Activated naive CD4-positive, alpha-beta T cell treated with anti-CD3 and anti-CD28 coated beads for 36 hours (primary cell): ENCODE measurements at regions of chr18 and their contacts with region 1.

Region 1: DNA sequence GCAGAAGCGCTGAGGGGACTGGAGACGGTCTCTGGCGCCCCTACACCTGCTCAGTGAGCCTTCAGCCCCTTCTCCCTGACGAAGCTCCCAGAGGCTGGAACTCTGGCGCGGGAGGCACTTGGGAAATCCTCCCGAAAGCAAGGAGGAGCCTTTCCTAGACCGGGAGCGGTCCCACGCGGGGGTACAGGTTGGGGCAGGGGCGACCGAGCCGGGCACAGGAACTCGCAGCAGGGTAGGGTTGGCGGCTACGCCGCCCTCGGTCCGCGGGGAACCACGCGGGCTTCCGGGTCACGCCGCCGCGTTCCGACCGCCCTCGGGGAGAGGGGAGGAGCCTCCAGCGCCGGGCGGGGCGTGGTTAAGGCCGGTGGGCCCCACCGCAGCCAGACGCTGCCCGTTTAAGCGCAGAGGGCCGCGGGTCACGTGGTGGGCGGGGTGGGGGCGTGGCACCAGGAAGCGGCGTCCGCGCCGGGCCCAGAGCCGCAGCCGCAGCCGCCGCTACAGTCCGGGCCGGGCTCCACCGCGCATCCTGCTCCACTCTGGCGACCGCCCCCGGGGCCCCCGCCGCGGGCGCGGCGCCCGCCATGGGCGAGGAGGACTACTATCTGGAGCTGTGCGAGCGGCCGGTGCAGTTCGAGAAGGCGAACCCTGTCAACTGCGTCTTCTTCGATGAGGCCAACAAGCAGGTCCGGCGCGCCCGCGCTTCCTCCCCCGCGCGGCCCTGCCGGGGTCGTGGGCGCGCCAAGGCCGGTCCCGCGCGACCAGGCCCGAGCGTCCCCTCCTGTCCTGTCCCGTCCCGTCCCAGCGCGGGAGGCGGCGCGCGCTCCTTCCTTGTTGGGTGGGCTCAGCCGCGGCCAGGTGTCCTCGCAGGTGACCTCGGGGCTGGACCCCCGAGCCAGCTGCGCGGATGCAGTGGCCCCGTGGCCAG is at the start of gene RMC1:
- DNase-seq: peak; percentile 97
- H3K4me3 Mint-ChIP-seq: peak within 1 kb of the TSS; percentile 92
- H3K27ac Mint-ChIP-seq: peak within 1 kb of the TSS; percentile 88
- H3K4me1 Mint-ChIP-seq: peaks cover 44% of the 10 kb centered on the region
- H3K27me3 Mint-ChIP-seq: no peaks in the 10 kb centered on the region
- total RNA-seq, gene RMC1: 26.2 to 29.7 TPM

Region 2: DNA sequence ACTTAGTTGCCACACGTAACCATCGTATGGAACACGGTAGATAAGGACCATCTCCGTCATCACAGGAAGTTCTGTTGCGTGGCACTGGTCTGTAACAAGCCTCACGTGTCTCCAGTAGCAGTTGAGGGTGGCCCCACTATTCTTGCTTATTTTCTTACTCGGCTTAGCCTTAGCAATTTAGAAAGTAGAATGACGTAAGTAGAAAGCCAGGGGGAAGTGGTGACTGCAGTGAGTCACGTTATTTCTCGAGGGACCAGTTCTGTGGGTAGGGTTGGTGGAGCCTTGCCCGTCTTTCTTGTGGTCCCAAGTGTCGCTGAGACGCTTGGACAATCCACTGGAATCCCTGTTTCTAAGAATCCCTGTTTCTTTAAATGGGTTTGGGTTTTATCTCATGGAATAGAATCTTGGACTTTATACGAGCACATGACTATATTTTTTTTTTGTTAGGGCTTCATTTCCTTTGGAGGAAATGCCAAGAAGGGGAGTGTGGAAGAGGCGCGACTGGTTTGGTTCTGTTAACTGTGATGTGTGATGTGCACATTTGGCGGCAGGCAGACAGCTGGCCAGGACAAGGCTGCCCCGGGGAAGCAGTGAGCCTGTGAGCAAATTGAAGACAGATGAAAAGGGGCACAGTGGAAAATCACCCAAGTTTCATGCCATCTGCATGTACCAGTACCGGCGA is 271.8 kb before region 1 on chr18:
- CTCF ChIA-PET with region 1: no interaction called
- intact Hi-C with region 1: loop called (anchors 1 kb)
- DNase-seq: peak; percentile 91
- H3K4me3 Mint-ChIP-seq: no peak overlapping the region
- H3K27ac Mint-ChIP-seq: peak overlapping the region; percentile 94
- H3K4me1 Mint-ChIP-seq: peaks cover 45% of the 10 kb centered on the region
- H3K27me3 Mint-ChIP-seq: no peaks in the 10 kb centered on the region

Region 3: DNA sequence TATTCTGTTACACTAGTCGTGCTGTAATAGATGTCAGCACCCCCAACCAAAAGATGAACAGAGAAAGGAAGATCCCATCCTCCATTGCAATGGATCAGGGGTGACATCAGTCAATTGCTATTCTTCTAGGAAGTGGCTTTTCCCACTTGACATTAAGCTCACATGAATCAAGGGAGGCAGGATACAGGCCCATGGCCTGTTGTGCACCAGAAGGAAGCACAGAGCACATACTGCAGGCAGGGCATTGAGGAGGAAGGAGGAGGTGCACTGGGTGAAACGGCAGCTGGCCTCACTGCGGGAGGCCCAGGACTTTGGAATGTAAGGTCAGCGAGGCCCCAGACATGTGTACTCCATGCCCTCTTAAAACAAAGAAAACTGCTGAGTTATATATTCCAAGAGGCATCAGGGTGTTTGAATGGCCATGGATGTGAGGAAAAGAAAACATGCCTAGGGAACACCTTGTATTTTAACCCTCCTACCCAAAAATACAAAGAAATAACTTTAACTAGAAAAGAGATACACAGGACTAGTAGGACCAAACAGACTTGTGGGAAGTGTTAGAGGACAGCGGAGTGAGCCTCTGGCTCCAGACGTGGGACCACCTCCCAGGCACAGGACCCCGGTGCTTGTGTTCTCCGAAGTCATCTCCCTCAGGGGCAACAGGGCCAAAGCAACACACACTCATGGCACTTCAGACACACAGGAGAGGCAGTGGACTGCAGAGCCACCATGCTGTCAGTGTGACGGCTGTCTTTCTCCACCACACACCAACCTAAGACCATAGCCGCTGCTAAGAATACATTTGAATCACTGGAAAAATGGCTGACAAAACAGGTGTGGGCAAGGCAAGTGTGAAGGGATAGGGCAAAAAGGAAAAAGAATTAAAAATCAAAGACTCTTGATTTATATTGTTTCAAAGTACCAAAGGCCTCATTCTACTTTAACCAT is 101.6 kb before region 1 on chr18:
- CTCF ChIA-PET with region 1: no interaction called
- intact Hi-C with region 1: no loop called
- DNase-seq: no peak
- H3K4me3 Mint-ChIP-seq: no peak overlapping the region
- H3K27ac Mint-ChIP-seq: no peak overlapping the region
- H3K4me1 Mint-ChIP-seq: peaks cover 15% of the 10 kb centered on the region
- H3K27me3 Mint-ChIP-seq: no peaks in the 10 kb centered on the region

Region 4: DNA sequence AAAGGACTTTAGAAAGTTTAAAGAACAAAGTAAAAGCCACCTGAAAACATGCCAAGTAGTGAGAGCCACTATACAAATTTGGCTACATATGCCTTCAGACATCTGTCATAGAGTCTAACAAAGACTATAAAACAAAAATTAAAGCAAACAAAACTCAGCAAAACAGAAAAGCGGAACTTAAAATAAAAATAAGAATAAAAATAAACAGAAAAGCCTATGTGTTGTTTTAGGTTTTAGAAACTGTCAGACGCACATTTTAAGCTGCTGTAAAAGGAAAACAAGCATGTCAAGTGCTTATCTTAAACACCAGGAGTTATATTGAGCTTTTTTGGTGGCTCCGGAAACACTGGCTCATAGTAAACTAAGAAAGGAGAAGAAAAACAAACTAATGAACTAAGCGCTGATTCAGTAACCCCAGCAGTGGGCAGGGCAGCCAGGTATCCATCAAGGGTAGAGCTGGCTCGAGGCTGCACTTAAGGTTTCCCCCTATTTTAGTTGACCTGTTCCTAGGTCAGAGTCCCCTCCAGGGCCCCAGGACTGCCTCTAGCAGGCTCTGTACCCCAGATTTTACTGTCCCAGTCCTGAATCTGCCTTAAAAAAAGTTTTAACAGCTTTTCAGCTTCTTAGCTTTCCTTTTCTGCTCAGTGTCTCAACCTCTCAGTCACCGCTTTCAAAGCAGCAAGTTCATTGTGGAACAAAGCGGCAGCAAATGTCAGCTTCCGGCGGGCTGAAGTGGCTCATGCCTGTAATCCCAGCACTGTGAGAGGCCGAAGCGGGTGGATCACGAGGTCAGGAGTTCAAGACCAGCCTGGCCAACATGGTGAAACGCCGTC is 15.3 kb before region 1 on chr18:
- CTCF ChIA-PET with region 1: interaction called, 27 read pairs
- intact Hi-C with region 1: loop called (anchors 1 kb)
- DNase-seq: peak; percentile 84
- H3K4me3 Mint-ChIP-seq: peak overlapping the region; percentile 57
- H3K27ac Mint-ChIP-seq: peak overlapping the region; percentile 86
- H3K4me1 Mint-ChIP-seq: peaks cover 19% of the 10 kb centered on the region
- H3K27me3 Mint-ChIP-seq: no peaks in the 10 kb centered on the region

Region 5: GRCh38 chr18:23605938-23606337 is 102.6 kb after region 1 on chr18:
- CTCF ChIA-PET with region 1: no interaction called
- intact Hi-C with region 1: no loop called
- DNase-seq: no peak
- H3K4me3 Mint-ChIP-seq: no peak overlapping the region
- H3K27ac Mint-ChIP-seq: no peak overlapping the region
- H3K4me1 Mint-ChIP-seq: no peaks in the 10 kb centered on the region
- H3K27me3 Mint-ChIP-seq: no peaks in the 10 kb centered on the region

Region 6: DNA sequence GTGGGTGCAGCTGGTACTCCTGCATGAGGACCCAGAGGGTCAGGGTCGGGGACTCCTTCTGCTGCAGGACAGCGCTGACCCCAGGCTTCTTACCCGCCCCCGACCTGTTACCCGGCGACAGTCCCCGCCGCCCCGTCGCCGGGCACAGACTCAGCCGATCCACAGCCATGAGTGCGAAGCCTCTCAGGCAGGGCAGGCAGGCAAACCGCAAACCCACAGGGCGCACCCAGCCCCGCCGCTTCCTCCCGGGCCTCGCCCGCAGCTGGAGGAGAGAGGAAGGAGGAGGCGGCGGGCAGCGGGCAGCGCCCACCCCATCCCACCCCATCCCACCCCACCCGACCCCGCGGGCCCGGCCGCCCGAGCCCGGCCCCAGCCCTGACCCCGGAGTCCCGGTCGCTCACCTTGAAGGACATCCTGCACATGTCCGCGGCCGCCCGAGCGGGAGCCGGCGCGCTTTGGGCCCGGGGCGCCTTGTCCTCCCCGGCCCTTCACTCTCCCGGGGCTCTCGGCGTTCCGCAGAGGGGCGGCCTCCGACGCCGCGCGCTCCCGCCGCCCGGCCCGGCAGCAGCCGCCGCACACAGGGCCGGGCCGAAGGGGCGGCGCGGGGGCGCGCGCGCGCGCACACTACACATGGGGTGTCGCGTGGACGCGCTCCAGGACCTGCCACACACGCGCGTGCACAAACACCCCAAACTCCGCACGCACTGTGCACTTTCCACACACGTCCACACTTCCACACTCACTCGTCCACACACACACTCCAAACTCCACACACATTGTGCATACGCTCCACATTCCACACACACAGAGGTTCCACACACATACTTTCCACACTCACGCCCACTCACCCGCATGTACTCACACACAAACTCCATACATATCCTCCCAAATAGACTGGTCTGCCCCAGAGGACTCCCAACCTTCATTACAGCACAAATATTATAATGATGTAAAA is 159.3 kb after region 1 on chr18 and contains the start of gene ANKRD29:
- CTCF ChIA-PET with region 1: no interaction called
- intact Hi-C with region 1: loop called (anchors 5 kb)
- DNase-seq: peak; percentile 74
- H3K4me3 Mint-ChIP-seq: peak within 1 kb of the TSS; percentile 76
- H3K27ac Mint-ChIP-seq: no peak within 1 kb of the TSS
- H3K4me1 Mint-ChIP-seq: peaks cover 21% of the 10 kb centered on the region
- H3K27me3 Mint-ChIP-seq: peaks cover 18% of the 10 kb centered on the region
- total RNA-seq, gene ANKRD29: not detected

Region 7: DNA sequence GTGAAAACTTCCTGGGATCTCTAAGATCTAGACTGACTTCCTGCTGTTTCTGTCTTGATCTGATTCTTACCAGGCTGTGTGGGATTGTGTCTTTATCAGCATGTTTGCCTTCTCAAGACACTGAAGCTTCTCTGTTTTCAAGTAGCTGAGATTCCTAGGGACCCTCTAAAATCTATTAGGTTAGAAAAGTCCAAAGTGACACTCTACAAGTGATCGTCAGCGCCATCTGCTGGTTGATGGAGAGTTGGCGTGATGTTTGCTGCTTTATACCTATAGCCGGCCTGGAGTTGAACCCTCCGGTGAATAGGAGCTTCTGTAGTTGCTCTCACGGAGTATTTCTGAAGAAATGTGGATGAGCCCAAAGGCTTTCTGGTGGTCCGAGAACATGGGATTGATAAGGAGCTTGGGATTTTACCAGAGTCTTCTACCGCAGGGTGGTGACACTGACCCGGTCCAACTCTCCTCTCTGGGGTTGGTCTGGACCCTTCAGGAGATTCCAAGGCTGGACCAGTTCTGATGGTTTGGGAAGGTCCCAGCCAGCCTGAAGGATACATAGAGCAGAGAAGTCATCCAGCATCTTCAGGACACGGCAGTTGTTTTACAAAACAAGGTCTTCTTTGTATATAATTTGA is 415.2 kb after region 1 on chr18:
- CTCF ChIA-PET with region 1: interaction called, 4 read pairs
- intact Hi-C with region 1: loop called (anchors 2 kb)
- DNase-seq: peak; percentile 91
- H3K4me3 Mint-ChIP-seq: no peak overlapping the region
- H3K27ac Mint-ChIP-seq: no peak overlapping the region
- H3K4me1 Mint-ChIP-seq: peaks cover 11% of the 10 kb centered on the region
- H3K27me3 Mint-ChIP-seq: no peaks in the 10 kb centered on the region